Activated T-helper 1 cell treated with anti-CD3 and anti-CD28 coated beads, Interleukin-12 subunit alpha, Interleukin-12 subunit beta, Interleukin-2, Interleukin-4 antibody, amounts not matched to agents 30 ng/mL and 10 ng/mL and 1 ng/mL, durations not matched to agents 14 hours and 24 hours and 36 hours (primary cell): ENCODE measurements at regions of chr1 and their contacts with region 1.

Region 1: GRCh38 chr1:48109390-48110013 is 112.3 kb upstream of the TRABD2B start:
- DNase-seq: no peak
- H3K4me3 Mint-ChIP-seq: no peak overlapping the region
- H3K27ac Mint-ChIP-seq: no peak overlapping the region
- H3K4me1 Mint-ChIP-seq: no peaks in the 10 kb centered on the region
- H3K27me3 Mint-ChIP-seq: peaks cover 3% of the 10 kb centered on the region

Region 2: DNA sequence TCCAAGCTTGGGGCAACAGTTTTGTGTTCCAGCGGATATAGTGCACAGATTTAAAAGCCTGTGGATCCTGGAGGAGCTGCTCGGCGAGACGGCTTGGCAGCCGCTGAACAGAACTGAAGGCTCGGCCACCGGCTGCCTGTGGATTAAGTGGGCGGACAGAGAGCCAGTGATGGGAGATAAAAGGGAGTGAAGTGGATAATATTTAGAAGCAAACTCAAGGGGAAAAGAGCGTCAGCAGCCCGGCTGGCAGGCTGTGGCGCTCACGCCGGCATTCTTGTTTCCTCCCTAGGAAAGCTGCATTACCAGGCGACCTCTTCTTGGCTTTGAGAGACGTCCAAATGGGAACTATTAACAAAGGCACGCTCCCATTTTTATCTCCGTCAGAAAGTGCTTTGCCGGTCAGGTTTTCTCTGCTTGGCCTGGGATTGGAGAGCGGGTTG is 122.7 kb before region 1 on chr1:
- intact Hi-C with region 1: no loop called
- DNase-seq: no peak
- H3K4me3 Mint-ChIP-seq: no peak overlapping the region
- H3K27ac Mint-ChIP-seq: no peak overlapping the region
- H3K4me1 Mint-ChIP-seq: no peaks in the 10 kb centered on the region
- H3K27me3 Mint-ChIP-seq: peaks cover 41% of the 10 kb centered on the region

Region 3: GRCh38 chr1:48093696-48094528 is 15.6 kb before region 1 on chr1:
- intact Hi-C with region 1: no loop called
- DNase-seq: peak; percentile 54
- H3K4me3 Mint-ChIP-seq: no peak overlapping the region
- H3K27ac Mint-ChIP-seq: no peak overlapping the region
- H3K4me1 Mint-ChIP-seq: no peaks in the 10 kb centered on the region
- H3K27me3 Mint-ChIP-seq: peaks cover 27% of the 10 kb centered on the region

Region 4: DNA sequence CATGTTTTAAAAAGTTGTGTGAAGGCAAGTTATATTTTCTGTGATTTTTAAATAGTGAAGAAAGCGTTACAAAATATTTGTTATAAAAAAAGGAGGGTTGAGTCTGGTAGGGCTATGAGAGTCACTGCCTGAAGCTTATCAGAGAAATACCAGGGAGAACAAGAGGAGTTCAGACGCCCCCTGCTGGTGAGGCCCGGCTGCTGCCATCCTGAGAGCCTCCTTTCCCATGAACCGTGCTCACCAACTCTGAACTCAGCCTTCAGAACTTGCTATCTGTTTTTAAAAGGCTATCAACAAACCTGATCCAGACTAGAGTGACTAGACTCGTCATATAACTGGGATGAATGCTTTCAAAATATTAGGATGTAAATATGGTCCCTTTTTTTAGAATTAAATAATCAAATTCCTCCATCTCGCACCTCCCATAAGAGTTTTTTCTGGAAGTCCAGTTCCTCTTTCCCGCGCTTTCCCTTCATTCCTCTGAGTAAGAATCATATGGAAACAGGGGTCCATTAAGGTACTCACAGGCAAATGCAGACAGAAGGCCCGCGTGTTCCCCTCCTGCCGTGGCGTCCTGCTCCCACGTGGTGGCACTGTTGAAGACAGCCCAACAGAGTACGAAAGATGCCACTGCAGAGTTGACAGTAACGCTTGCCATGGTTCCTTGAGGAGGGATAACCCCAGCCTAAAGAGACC is 388.7 kb after region 1 on chr1:
- intact Hi-C with region 1: loop called (anchors 1 kb)
- DNase-seq: peak; percentile 32
- H3K4me3 Mint-ChIP-seq: no peak overlapping the region
- H3K27ac Mint-ChIP-seq: no peak overlapping the region
- H3K4me1 Mint-ChIP-seq: peaks cover 6% of the 10 kb centered on the region
- H3K27me3 Mint-ChIP-seq: peaks cover 2% of the 10 kb centered on the region